Dorsolateral prefrontal cortex (tissue), 120 donors: ENCODE measurements at regions of chr12 and their contacts with region 1.

Region 1: GRCh38 chr12:106149096-106149784 is 10.5 kb upstream of the NUAK1 start:
- DNase-seq: peak in 2 of 10 donors; percentile 33 to 40
- H3K4me3 ChIP-seq: no peak overlapping the region
- H3K27ac ChIP-seq: peak overlapping the region in 14 of 59 donors; percentile 3 to 74 (median 40)
- H3K27me3 ChIP-seq: no peaks in the 10 kb centered on the region
- CTCF ChIP-seq: peak in 55 of 56 donors; percentile 10 to 75 (median 53)

Region 2: GRCh38 chr12:105420659-105421240 is 728.5 kb before region 1 on chr12:
- intact Hi-C with region 1: loop called in 1 of 2 experiments (anchors 5 kb)
- DNase-seq: peak; percentile 53 to 89 (median 77)
- H3K4me3 ChIP-seq: no peak overlapping the region
- H3K27ac ChIP-seq: no peak overlapping the region
- H3K27me3 ChIP-seq: no peaks in the 10 kb centered on the region
- CTCF ChIP-seq: peak; percentile 79 to 99 (median 93)

Region 3: GRCh38 chr12:105538880-105539279 is 610.4 kb before region 1 on chr12:
- intact Hi-C with region 1: loop called in 1 of 2 experiments (anchors 5 kb)
- DNase-seq: no peak
- H3K4me3 ChIP-seq: no peak overlapping the region
- H3K27ac ChIP-seq: no peak overlapping the region
- H3K27me3 ChIP-seq: no peaks in the 10 kb centered on the region
- CTCF ChIP-seq: no peak

Region 4: GRCh38 chr12:105948331-105948730 is 200.9 kb before region 1 on chr12:
- intact Hi-C with region 1: no loop called
- DNase-seq: peak in 1 of 10 donors; percentile 32
- H3K4me3 ChIP-seq: no peak overlapping the region
- H3K27ac ChIP-seq: peak overlapping the region in 1 of 59 donors; percentile 9
- H3K27me3 ChIP-seq: no peaks in the 10 kb centered on the region
- CTCF ChIP-seq: no peak

Region 5: DNA sequence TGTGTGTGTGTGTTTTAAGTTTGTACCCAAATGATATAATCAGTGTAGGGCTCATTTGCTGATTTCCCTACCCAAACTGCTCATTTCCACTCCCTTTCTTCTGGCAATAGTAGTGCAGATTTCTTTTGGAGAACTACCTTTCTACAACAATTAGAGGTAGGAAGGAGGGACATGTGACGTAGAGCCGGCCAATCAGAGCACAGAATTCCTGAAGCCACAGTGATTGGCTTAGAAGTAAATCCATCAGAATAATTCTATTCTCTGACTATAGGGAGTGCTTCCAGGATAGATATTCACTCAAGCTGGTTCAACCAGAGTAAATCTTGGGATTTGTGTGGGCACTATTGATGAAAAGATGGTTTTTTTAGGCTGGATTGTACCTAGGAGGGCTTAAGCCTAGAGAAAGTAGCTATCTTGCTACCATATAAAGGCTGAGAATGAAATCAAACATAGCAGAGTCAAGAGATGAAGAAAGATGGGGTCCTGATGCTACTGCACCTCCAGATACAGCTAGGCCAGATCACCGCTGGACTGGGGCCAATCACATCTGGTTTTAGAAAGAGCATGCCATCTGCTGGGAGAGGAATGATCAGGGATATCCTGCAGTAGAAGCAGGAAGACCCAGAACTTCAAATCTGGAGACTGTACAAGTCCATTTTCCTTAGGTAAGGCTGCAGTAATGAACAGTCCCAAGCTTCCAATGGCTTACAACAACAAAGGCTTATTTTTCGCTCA is 43.6 kb after region 1 on chr12:
- intact Hi-C with region 1: loop called in 1 of 2 experiments (anchors 5 kb)
- DNase-seq: peak in 1 of 10 donors; percentile 63
- H3K4me3 ChIP-seq: no peak overlapping the region
- H3K27ac ChIP-seq: peak overlapping the region in 1 of 59 donors; percentile 13
- H3K27me3 ChIP-seq: peaks cover 0 to 6% (median 0%) of the 10 kb centered on the region in 45 donors
- CTCF ChIP-seq: peak in 10 of 56 donors; percentile 11 to 38 (median 28)